ENCODE measurements at regions of chr19 and their contacts with region 1.

Region 1: GRCh38 chr19:13747098-13747453 is 17.2 kb upstream of the MRI1 start:
- H3K4me3 Mint-ChIP-seq: peak overlapping the region; percentile 86
- H3K27ac Mint-ChIP-seq: peak overlapping the region; percentile 88
- H3K4me1 Mint-ChIP-seq: peaks cover 55% of the 10 kb centered on the region
- H3K27me3 Mint-ChIP-seq: no peaks in the 10 kb centered on the region

Region 2: GRCh38 chr19:13718733-13719132 is 28.3 kb before region 1 on chr19:
- intact Hi-C with region 1: no loop called
- H3K4me3 Mint-ChIP-seq: no peak overlapping the region
- H3K27ac Mint-ChIP-seq: no peak overlapping the region
- H3K4me1 Mint-ChIP-seq: peaks cover 6% of the 10 kb centered on the region
- H3K27me3 Mint-ChIP-seq: peaks cover 24% of the 10 kb centered on the region

Region 3: DNA sequence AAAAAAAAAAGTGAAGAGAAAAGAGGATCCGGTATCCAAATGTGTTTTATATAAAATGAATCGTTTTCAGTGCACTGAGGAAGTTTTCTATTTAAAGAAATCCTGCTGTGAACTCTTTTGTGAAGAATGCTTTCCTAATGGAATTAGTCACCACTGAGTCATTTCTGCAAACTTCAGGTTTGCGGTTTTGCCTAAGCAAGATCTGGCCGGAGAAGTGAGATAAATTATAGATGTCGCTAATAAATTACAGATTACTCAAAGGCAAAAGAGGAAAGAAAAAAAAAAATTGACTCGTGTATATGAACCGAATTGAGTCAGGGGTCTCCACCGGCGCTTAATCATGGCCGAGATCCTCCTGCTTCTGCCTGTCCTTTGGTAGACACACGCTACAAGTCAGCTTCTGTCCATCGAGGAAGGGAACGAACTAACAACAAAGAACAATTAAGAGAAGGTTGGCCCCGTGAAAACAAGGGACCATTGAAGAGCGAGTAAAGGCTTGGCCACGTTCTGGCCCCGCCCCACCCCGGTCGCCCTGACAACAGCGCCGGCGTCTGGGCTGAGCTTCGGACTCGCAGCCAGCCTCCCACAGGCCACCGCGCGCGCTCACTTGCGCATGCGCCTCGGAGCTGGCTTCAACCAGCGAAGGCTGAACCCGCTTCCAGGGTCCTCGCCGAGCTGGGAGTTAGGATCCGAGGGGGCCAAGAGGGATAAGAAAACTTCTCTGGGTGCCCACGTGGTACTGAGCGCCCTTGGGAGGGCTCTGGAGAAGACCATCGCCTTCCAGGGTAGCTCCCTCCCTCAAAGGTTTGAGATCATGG is 15.7 kb before region 1 on chr19:
- intact Hi-C with region 1: loop called (anchors 2 kb)
- H3K4me3 Mint-ChIP-seq: peak overlapping the region; percentile 82
- H3K27ac Mint-ChIP-seq: peak overlapping the region; percentile 100
- H3K4me1 Mint-ChIP-seq: peaks cover 27% of the 10 kb centered on the region
- H3K27me3 Mint-ChIP-seq: no peaks in the 10 kb centered on the region

Region 4: DNA sequence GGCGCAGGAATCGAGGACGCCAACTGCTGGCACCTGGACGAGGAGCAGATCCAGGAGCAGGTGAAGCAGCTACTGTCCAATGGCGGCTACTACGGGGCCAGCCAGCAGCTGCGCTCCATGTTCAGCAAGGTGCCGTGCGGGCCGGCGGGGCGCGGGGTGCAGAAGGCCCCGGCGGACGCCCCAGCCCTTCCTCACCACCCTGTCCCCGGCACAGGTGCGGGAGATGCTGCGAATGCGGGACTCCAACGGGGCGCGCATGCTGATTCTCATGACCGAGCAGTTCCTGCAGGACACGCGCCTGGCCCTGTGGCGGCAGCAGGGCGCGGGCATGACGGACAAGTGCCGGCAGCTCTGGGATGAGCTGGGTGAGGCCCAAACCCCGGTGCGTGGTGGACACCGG is 61.8 kb after region 1 on chr19:
- intact Hi-C with region 1: no loop called
- H3K4me3 Mint-ChIP-seq: no peak overlapping the region
- H3K27ac Mint-ChIP-seq: no peak overlapping the region
- H3K4me1 Mint-ChIP-seq: peaks cover 5% of the 10 kb centered on the region
- H3K27me3 Mint-ChIP-seq: no peaks in the 10 kb centered on the region